Psoas muscle (tissue), 8 donors: ENCODE measurements at regions of chr12 and their contacts with region 1.

Region 1: DNA sequence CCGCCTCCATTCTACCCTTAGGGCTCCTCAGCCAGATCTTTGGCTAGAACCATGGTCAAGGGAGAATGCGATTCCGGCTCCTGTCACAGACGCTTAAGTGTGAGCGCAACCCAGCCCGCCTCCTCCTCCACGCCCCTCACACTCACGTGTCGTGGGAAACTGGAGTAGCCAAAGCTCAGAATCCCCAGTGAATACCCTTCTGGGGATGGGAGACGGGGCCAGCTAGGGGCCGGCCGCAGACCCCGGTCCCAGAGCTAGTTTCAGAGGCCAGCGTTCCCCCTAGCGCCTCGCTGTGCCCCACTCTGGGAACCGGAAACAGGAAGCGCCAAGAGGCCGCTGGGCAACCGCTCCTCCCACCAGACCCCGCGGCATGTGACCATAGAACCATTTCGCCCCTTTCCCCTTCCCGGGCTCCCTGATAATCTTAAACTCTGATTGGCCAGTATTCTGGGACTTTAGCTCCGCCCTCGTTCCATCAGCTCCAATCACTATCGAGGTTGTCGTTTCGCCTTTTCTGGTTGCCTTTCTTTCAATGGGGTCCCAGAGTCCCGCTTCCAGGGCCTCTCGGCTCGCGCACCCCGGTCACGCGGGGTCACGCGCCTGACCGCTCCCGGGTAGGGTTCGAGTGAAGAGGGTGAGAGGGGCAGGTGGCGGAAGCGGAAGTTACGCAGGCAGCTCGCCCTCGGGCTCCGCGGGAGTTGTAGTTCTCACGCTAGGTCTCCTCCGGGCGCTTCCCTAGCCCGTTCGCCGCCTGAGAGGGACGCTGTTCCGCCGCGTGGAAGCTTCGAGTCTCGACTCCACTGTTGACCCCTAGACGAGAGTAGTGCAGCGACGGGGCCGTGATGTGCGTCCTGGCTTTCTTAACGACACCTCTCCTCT is at the start of gene M6PR:
- DNase-seq: peak; percentile 93 to 97
- ATAC-seq: peak; percentile 95 to 97 (median 96)
- H3K4me3 ChIP-seq: peak within 1 kb of the TSS; percentile 80
- H3K27ac ChIP-seq: peak within 1 kb of the TSS; percentile 99
- H3K4me1 ChIP-seq: peaks cover 24% of the 10 kb centered on the region
- H3K27me3 ChIP-seq: no peaks in the 10 kb centered on the region
- CTCF ChIP-seq: peak; percentile 61
- total RNA-seq, gene M6PR: 45.8 to 85.0 (median 62.6) TPM

Region 2: GRCh38 chr12:8870586-8870985 is 79.0 kb before region 1 on chr12:
- intact Hi-C with region 1: no loop called
- DNase-seq: no peak
- ATAC-seq: no peak
- H3K4me3 ChIP-seq: no peak overlapping the region
- H3K27ac ChIP-seq: no peak overlapping the region
- H3K4me1 ChIP-seq: no peaks in the 10 kb centered on the region
- H3K27me3 ChIP-seq: no peaks in the 10 kb centered on the region
- CTCF ChIP-seq: no peak

Region 3: DNA sequence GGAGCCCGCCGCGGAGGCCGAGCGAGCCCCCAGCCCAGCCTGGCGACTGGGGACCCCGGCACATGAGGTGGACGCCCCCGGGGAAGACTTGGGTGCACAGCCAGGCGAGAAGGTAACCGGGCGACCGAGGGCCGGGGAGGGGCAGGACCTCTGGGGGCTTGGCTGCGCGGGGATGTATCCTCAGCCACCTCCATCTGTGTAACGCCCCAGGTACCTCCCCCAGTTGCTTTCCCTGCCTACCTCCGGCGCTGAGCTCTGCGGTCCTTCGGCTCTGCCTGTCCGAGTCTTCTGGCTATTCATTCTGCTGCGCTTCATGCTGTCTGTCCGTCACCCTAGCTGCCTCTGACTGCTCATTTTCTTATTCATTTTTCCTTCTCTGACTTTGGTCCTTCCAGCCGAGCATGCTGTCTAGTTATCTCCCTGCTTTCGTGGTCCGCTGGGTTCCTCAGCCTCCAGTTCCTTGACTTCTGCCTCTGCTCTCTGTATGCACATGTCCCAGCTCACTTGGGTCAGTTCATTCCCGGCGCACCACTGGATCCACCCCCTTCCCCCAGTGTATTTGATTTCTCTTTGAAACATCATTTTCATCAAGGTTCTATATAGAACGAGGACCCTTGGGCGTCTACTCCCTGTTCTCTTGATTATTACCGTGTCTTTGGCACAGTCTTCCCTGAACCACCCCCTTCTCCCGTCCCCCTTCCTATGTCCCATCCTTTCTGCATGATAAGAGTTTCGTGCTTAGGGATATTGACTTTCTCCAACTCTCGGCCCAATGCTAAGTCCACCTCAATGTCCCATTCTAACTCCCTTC is 34.7 kb before region 1 on chr12:
- intact Hi-C with region 1: loop called in 1 of 2 experiments (anchors 5 kb)
- DNase-seq: peak; percentile 35 to 60
- ATAC-seq: peak; percentile 50 to 67 (median 62)
- H3K4me3 ChIP-seq: peak overlapping the region; percentile 84
- H3K27ac ChIP-seq: peak overlapping the region; percentile 50
- H3K4me1 ChIP-seq: peaks cover 12% of the 10 kb centered on the region
- H3K27me3 ChIP-seq: no peaks in the 10 kb centered on the region
- CTCF ChIP-seq: no peak

Region 4: DNA sequence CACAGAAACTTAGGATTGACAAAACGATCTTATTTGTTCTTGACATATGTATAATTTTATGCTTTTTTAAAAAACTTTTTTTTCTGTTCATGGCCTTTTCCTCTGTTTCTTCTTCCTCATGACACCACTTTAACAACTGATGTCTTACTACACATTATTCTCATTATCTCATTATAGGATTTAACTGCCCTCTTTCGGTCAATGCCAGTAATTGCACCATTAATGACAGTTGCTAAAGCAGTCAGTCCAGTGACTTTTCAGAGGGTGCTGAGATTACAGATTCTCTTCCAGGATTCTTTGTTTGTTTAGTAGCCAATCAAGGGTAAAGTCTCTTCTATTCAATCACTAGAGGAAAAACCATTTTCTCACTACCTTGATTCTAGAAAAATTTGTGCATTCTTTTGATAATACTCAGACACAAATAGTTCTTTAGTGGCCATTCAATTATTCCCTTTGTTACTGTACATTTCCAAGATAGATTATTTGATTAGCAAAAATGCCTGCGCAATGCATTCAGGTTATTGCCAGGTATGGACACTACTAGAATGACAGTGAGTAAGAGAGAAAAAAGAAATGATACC is 89.9 kb after region 1 on chr12:
- intact Hi-C with region 1: loop called (anchors 2 to 5 kb)
- DNase-seq: no peak
- ATAC-seq: peak; percentile 58 to 76 (median 66)
- H3K4me3 ChIP-seq: no peak overlapping the region
- H3K27ac ChIP-seq: no peak overlapping the region
- H3K4me1 ChIP-seq: peaks cover 12% of the 10 kb centered on the region
- H3K27me3 ChIP-seq: no peaks in the 10 kb centered on the region
- CTCF ChIP-seq: peak; percentile 73

Region 5: DNA sequence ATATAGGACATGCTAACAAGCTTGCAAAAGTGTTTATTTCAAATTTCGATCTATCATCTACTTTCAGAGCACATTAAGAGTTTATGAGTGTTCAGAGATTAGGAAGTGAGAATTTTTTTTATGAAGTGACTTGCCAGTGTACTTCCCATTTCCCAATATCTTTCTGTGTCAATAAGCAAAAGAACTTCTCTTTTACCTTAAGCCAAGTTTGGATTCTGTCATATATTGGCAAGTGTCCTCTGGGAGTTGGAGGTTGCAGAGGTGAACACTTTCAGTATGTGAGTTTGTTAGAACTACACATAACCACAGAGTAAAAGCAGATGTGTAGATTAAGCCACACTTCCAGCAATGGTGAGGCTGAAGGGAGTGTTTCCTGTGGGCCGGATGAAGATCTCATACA is 861.1 kb after region 1 on chr12:
- intact Hi-C with region 1: no loop called
- DNase-seq: no peak
- ATAC-seq: no peak
- H3K4me3 ChIP-seq: no peak overlapping the region
- H3K27ac ChIP-seq: no peak overlapping the region
- H3K4me1 ChIP-seq: peaks cover 7% of the 10 kb centered on the region
- H3K27me3 ChIP-seq: no peaks in the 10 kb centered on the region
- CTCF ChIP-seq: no peak